ENCODE measurements at regions of chr2 and their contacts with region 1.

Region 1: DNA sequence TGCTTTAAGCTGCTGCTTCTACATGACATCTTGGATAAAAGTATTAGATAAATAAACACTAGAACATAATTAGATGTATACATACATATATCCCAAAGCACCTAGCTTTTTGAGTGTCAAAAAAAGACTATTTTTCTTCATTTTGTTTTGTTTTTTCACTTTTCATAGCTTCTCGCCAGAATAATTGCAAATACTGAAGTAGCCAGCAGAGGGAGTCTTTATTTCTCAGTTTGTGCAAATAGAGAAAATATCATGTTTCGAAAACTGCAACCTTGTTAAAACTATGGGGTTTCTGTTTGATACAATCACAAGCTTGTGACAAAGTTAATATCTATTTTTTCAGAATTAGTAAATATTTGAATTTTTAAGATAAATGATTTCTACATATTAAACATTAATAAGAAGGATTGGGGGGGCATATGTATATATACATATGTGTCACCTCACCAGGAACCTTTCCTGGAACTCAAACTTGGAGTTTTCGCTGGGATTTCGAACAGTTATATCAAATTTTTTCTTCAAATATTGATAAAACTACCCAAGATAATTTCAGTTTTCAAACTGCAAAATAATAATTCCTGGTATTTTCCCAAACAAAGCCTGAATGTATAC is 61.0 kb downstream of the GRB14 start:
- DNase-seq: no peak

Region 2: GRCh38 chr2:164574925-164575324 is 14.6 kb after region 1 on chr2:
- intact Hi-C with region 1: no loop called
- DNase-seq: no peak

Region 3: GRCh38 chr2:164599966-164600589 is 39.8 kb after region 1 on chr2:
- intact Hi-C with region 1: loop called (anchors 5 kb)
- DNase-seq: no peak

Region 4: GRCh38 chr2:164719996-164720941 is 160.0 kb after region 1 on chr2:
- intact Hi-C with region 1: loop called (anchors 5 kb)
- DNase-seq: no peak

Measured in cardiac septum (tissue), 1 donor.